CD4-positive, alpha-beta T cell (primary cell): ENCODE measurements at regions of chr7 and their contacts with region 1.

Region 1: DNA sequence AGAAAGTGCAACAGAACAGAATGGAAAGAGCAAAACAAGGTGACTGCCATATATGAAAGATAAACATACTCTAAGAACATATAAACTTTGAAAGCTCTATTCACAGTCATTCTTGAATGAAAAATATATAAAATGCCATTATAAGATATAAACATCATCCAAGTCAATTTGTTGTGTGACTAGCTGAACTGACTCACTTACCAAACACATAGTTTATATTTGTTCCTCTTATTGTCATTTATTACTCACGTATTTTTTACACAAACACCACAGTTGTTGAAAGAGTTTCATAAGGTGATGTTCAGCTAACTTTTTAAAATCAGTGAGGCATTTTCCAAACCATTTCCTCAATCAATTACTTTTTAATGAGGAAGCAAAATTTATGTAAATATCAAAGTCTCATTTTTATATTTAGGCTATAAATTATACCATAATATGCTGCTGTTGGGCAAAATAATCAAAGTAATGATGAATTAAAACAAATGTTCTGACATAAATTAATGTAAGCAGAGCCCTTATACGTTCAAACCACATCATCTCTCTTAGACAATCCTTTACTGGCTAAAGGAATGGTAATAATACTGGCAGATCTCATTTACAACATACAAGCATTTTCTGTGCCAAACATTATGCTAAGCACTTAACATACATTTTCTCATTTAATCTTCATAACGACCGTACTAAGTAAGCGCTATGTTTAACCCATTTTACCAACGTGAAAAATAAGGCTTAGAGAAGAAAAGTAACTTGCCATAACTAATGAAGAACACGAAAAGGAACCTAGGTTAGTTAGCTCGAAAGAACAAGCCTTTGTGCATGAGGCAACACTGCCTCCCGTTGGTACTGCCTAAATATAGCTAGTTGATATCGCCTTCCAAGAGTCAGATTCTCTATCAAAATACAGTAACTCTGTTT is 7.3 kb downstream of the LRRN3 start:
- DNase-seq: peak; percentile 27 to 82 (median 53)
- ATAC-seq: peak; percentile 95
- H3K4me3 ChIP-seq: no peak overlapping the region
- H3K4me3 Mint-ChIP-seq: peak overlapping the region; percentile 75
- H3K27ac ChIP-seq: no peak overlapping the region
- H3K27ac Mint-ChIP-seq: peak overlapping the region; percentile 82
- H3K4me1 ChIP-seq: no peaks in the 10 kb centered on the region
- H3K4me1 Mint-ChIP-seq: peaks cover 73% of the 10 kb centered on the region
- H3K27me3 ChIP-seq: no peaks in the 10 kb centered on the region
- H3K27me3 Mint-ChIP-seq: no peaks in the 10 kb centered on the region
- CTCF ChIP-seq: peak; percentile 82

Region 2: DNA sequence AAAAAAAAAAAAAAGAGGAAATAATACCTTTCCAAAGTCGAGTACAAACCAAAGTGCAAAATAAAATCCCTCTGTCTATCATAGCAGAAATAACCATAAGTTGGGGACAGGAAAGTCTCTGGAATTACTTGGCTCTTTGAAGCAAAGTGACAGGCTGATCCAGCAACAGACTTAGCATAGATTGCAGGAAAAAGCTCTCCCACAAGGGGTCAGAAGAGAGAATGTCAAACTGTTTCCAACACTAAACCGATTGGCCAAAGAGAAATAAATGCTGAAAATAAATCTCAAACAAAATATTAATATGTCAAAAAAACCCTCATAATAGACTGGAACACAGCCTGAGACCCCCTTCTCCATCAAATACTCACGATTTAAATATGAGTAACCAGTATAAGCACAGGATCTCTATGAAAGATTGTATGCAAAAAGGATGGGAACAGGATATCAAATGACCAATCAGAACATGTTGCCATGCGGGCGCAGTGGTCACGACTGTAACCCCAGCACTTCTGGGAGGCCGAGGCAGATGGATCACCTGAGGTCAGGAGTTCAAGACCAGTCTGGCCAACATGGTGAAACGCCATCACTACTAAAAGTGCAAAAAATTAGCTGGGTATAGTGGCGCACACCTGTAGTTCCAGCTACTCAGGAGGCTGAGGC is 1008.0 kb before region 1 on chr7:
- CTCF ChIA-PET with region 1: interaction called, 3 read pairs
- POLR2A ChIA-PET with region 1: no interaction called
- intact Hi-C with region 1: loop called in 1 of 2 experiments (anchors 10 kb)
- DNase-seq: peak in 4 of 14 experiments; percentile 10 to 29 (median 20)
- ATAC-seq: no peak
- H3K4me3 ChIP-seq: no peak overlapping the region
- H3K4me3 Mint-ChIP-seq: no peak overlapping the region
- H3K27ac ChIP-seq: no peak overlapping the region
- H3K27ac Mint-ChIP-seq: no peak overlapping the region
- H3K4me1 ChIP-seq: no peaks in the 10 kb centered on the region
- H3K4me1 Mint-ChIP-seq: no peaks in the 10 kb centered on the region
- H3K27me3 ChIP-seq: no peaks in the 10 kb centered on the region
- H3K27me3 Mint-ChIP-seq: peaks cover 6% of the 10 kb centered on the region
- CTCF ChIP-seq: peak; percentile 36

Region 3: DNA sequence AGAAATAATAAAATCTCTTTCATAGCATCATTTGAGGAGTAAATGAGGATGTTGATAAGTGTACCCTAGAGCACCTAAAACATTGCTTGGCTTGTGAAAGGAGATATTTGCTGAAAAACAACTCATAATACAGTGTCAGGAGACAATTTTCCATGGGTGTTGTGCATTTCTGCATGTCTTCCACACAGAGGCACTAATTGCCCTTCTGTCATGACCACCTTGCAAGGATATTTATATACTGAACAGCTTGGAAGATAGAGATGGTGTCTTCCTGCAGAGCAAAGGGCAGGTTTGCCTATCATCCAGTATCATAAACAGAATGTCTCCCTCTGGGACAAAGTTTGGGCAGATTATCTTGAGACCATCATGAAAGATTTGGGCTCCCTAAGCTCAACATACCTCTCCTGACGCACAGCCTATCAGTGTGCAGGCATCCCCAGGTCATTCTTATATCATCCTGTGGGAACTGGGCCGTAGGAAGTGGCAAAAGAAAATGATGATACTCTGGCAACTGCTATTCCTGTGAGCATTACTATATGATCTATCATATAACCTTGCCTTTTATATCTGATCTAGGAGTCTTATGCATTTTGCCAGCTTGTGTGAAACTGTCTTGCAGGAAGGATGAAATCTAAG is 502.5 kb before region 1 on chr7:
- CTCF ChIA-PET with region 1: interaction called, 3 read pairs
- POLR2A ChIA-PET with region 1: interaction called, 14 read pairs
- intact Hi-C with region 1: loop called (anchors 1 to 2 kb)
- DNase-seq: peak in 2 of 14 experiments; percentile 17 to 19
- ATAC-seq: no peak
- H3K4me3 ChIP-seq: no peak overlapping the region
- H3K4me3 Mint-ChIP-seq: no peak overlapping the region
- H3K27ac ChIP-seq: no peak overlapping the region
- H3K27ac Mint-ChIP-seq: no peak overlapping the region
- H3K4me1 ChIP-seq: no peaks in the 10 kb centered on the region
- H3K4me1 Mint-ChIP-seq: no peaks in the 10 kb centered on the region
- H3K27me3 ChIP-seq: no peaks in the 10 kb centered on the region
- H3K27me3 Mint-ChIP-seq: no peaks in the 10 kb centered on the region
- CTCF ChIP-seq: no peak

Region 4: GRCh38 chr7:111083413-111083812 is 14.9 kb before region 1 on chr7:
- CTCF ChIA-PET with region 1: interaction called, 13 read pairs
- POLR2A ChIA-PET with region 1: interaction called, 42 read pairs
- intact Hi-C with region 1: no loop called
- DNase-seq: peak in 10 of 14 experiments; percentile 16 to 91 (median 40)
- ATAC-seq: peak; percentile 95
- H3K4me3 ChIP-seq: peak overlapping the region; percentile 2
- H3K4me3 Mint-ChIP-seq: peak overlapping the region; percentile 47
- H3K27ac ChIP-seq: peak overlapping the region; percentile 38 to 42
- H3K27ac Mint-ChIP-seq: peak overlapping the region; percentile 73
- H3K4me1 ChIP-seq: peaks cover 20% of the 10 kb centered on the region
- H3K4me1 Mint-ChIP-seq: peaks cover 77% of the 10 kb centered on the region
- H3K27me3 ChIP-seq: no peaks in the 10 kb centered on the region
- H3K27me3 Mint-ChIP-seq: no peaks in the 10 kb centered on the region
- CTCF ChIP-seq: no peak

Region 5: GRCh38 chr7:111735661-111736551 is 637.6 kb after region 1 on chr7:
- CTCF ChIA-PET with region 1: no interaction called
- POLR2A ChIA-PET with region 1: no interaction called
- intact Hi-C with region 1: loop called (anchors 5 to 10 kb)
- DNase-seq: peak in 12 of 14 experiments; percentile 15 to 76 (median 41)
- ATAC-seq: peak; percentile 51
- H3K4me3 ChIP-seq: no peak overlapping the region
- H3K4me3 Mint-ChIP-seq: no peak overlapping the region
- H3K27ac ChIP-seq: no peak overlapping the region
- H3K27ac Mint-ChIP-seq: no peak overlapping the region
- H3K4me1 ChIP-seq: no peaks in the 10 kb centered on the region
- H3K4me1 Mint-ChIP-seq: no peaks in the 10 kb centered on the region
- H3K27me3 ChIP-seq: no peaks in the 10 kb centered on the region
- H3K27me3 Mint-ChIP-seq: peaks cover 14% of the 10 kb centered on the region
- CTCF ChIP-seq: peak; percentile 95